K562 (cell line): ENCODE measurements at regions of chr1 and their contacts with region 1.

Region 1: DNA sequence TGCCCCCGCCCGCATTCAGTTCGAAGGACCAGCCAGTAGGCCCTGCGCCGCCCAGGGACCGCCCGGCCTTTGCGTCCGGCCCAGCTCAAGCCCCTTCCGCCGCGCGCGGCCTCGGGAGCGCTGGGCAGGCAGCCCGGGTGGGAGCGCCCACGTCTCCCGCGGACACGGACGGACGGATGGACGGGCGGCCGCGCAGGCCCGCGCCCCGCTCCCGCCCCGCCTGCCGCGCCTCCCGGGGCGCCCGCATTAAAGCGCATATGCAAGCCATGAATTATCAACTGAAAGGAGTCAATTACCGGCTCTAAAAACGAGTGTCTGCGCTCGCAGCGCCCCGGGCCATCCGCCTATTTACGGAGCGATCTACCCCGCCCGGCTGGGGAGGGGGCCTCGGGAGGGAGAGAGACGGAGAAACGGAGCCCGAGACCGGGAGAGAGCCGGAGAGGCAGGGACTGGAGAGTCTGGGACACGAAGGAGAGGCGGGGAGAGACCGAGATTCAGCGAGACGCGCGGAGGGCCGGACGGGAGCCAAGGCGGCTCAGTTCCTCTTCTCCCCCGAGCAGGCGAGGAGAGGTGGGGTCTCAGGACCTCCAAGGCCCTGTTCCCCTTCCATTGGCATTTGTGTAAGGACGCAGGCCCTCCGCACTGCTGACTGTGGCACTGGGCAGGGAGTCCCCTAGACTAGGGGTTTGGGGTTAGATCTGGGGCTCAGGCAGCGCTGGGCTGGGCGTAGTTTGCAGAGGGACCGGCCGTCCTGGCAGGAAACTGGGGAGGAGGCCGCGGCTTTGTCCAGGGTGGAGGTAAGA is 41.3 kb upstream of the DMBX1 start:
- DNase-seq: no peak
- ATAC-seq: no peak
- H3K4me3 ChIP-seq: no peak overlapping the region
- H3K27ac ChIP-seq: no peak overlapping the region
- H3K4me1 ChIP-seq: peaks cover 22 to 49% of the 10 kb centered on the region in 2 experiments
- H3K27me3 ChIP-seq: peaks cover 0 to 1% of the 10 kb centered on the region in 2 experiments; a peak in 2 of 5 replicates
- CTCF ChIP-seq: no peak
- EP300 ChIP-seq: no peak
- POLR2A ChIP-seq: no peak
- RAD21 ChIP-seq: no peak

Region 2: DNA sequence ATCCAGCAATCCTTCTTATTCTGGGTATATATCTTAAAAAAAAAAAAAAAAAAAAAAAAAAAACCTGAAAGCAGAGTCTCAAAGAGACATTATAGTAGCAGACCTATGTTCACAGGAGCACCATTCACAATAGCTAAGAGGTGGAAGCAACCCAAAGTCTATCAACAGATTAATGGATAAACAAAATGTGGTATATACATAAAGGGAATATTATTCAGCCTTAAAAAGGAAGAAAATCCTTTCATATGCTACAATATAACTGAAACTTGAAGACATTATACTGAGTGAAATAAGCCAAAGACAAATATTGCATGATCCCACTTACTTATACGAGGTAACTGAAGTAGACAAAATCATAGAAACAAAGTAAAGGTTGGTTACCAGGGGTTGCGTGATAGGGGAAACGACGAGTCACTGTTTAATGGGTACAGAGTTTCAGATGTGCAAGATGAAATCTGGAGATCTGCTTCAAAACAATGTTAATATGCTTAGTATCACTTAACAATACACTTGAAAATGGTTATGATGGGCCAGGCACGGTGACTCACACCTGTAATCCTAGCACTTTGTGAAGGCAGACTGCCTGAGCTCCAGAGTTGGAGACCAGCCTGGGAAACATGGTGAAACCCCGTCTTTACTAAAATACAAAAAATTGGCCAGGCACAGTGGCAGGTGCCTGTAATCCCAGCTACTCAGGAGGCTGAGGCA is 345.4 kb before region 1 on chr1:
- CTCF ChIA-PET with region 1: no interaction called
- POLR2A ChIA-PET with region 1: no interaction called
- in situ Hi-C with region 1: no loop called
- intact Hi-C with region 1: no loop called
- DNase-seq: no peak
- ATAC-seq: no peak
- H3K4me3 ChIP-seq: no peak overlapping the region
- H3K27ac ChIP-seq: no peak overlapping the region
- H3K4me1 ChIP-seq: no peaks in the 10 kb centered on the region
- H3K27me3 ChIP-seq: no peaks in the 10 kb centered on the region
- CTCF ChIP-seq: no peak
- EP300 ChIP-seq: no peak
- POLR2A ChIP-seq: no peak
- RAD21 ChIP-seq: no peak

Region 3: GRCh38 chr1:46461809-46462448 is 13.6 kb after region 1 on chr1:
- CTCF ChIA-PET with region 1: no interaction called
- POLR2A ChIA-PET with region 1: interaction called, 16 read pairs
- in situ Hi-C with region 1: no loop called
- intact Hi-C with region 1: no loop called
- DNase-seq: peak in 2 of 4 experiments; percentile 40 to 53
- ATAC-seq: peak; percentile 43
- H3K4me3 ChIP-seq: no peak overlapping the region
- H3K27ac ChIP-seq: no peak overlapping the region
- H3K4me1 ChIP-seq: peaks cover 15 to 26% of the 10 kb centered on the region in 2 experiments; a peak in 4 of 5 replicates
- H3K27me3 ChIP-seq: peaks cover 0 to 27% of the 10 kb centered on the region in 2 experiments; a peak in 3 of 5 replicates
- CTCF ChIP-seq: no peak
- EP300 ChIP-seq: no peak
- POLR2A ChIP-seq: no peak
- RAD21 ChIP-seq: no peak